PC-3 (cell line): ENCODE measurements at regions of chrX and their contacts with region 1.

Region 1: DNA sequence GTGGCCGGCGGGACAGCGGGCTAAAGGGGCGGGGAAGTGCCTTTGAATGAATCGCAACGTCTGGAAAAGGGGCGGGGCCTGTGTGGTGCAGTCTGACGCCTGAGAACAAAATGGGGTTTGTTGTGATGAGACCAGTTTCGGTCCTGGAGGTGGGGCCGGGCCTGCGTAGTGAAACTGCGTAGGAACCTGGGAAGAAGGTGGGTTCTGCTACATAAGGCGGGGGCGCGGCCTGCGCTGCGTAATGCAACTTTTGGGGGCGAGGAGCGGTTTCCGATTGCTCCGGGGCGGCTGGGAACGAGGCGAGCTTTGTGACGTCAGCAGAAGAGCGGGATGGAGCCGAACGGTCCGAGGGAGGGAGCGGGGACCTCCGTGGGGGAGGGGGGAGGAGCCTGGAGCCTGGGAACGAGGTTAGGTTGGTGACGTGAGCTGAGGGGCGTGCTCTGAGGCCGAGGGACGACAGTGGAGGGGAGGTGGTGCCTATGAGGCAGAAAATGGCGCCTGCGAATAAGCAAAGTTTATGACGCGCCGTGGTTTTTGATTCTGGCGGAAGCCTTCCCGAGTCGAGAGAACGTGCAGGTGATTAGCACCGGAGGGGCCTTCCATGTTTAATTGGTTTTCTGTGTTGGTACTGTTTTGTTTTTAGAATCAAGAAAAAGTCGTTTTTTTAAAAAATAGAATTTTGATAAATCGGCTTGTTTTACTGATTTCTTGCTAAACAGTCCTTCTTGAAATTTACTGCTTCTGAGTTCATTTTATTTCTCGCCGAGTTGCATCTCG is 716 bp downstream of the USP11 start:
- DNase-seq: peak; percentile 91
- ATAC-seq: peak; percentile 91
- H3K4me3 ChIP-seq: peak overlapping the region; percentile 77
- H3K27ac ChIP-seq: peak overlapping the region; percentile 98
- H3K4me1 ChIP-seq: peaks cover 9% of the 10 kb centered on the region
- H3K27me3 ChIP-seq: no peaks in the 10 kb centered on the region
- CTCF ChIP-seq: no peak

Region 2: GRCh38 chrX:47217642-47218279 is 15.8 kb before region 1 on chrX:
- CTCF ChIA-PET with region 1: interaction called, 4 read pairs
- POLR2A ChIA-PET with region 1: interaction called, 6 read pairs
- intact Hi-C with region 1: loop called (anchors 1 kb)
- DNase-seq: peak; percentile 98
- ATAC-seq: peak; percentile 83
- H3K4me3 ChIP-seq: peak overlapping the region; percentile 93
- H3K27ac ChIP-seq: peak overlapping the region; percentile 96
- H3K4me1 ChIP-seq: peaks cover 34% of the 10 kb centered on the region
- H3K27me3 ChIP-seq: no peaks in the 10 kb centered on the region
- CTCF ChIP-seq: no peak

Region 3: GRCh38 chrX:47296766-47297365 is 63.3 kb after region 1 on chrX:
- CTCF ChIA-PET with region 1: no interaction called
- POLR2A ChIA-PET with region 1: interaction called, 22 read pairs
- intact Hi-C with region 1: no loop called
- DNase-seq: peak; percentile 71
- ATAC-seq: no peak; the same call in 1 of the 2 replicates
- H3K4me3 ChIP-seq: 0 out of 2 replicates have a peak overlapping the region, but pooled peaks have one; percentile 29
- H3K27ac ChIP-seq: peak overlapping the region; percentile 93
- H3K4me1 ChIP-seq: peaks cover 12% of the 10 kb centered on the region
- H3K27me3 ChIP-seq: no peaks in the 10 kb centered on the region
- CTCF ChIP-seq: no peak

Region 4: DNA sequence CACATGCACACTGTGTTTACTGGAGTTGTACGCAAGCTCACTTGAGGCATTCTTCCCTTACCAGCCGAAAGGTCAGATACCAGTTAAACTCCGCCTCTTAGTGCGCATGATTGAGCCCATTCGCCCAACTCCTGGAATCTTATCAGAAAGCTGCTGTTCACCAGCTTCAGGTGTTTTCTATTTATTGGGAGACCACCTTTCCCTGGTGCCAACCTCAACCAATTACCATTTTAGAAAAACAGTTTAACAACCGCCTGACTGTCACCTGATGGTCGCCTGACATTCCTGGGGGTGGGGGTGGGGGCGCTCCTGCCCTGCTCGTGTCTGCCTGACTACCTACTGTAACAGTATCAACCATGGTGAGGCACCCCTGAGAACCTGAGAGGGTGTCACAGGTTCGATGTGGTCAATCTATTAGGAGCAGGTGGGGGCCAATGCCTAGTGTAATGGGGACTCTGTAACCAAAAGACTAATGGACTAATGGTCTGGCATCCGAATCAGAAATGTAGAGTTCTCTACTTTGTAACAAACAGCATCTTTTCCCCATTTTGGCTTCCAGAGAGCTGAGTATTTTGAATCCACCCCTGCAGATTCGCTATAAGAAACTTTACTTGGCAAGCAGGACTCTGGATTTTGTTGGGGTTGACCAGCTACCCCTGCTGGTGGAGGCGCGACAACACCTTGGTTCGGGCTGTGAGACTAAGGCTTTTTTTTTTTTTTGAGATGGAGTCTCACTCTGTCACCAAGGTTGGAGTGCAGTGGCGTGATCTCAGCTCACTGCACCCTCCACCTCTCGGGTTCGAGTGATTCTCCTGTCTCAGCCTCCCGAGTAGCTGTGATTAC is 78.6 kb after region 1 on chrX:
- CTCF ChIA-PET with region 1: interaction called, 3 read pairs
- POLR2A ChIA-PET with region 1: no interaction called
- intact Hi-C with region 1: loop called (anchors 5 kb)
- DNase-seq: peak; percentile 74
- ATAC-seq: peak; percentile 65
- H3K4me3 ChIP-seq: peak overlapping the region; percentile 51; the same call in 1 of the 2 replicates
- H3K27ac ChIP-seq: peak overlapping the region; percentile 32; the same call in 1 of the 2 replicates
- H3K4me1 ChIP-seq: peaks cover 4% of the 10 kb centered on the region; the same call in 1 of the 2 replicates
- H3K27me3 ChIP-seq: no peaks in the 10 kb centered on the region
- CTCF ChIP-seq: peak; percentile 75

Region 5: DNA sequence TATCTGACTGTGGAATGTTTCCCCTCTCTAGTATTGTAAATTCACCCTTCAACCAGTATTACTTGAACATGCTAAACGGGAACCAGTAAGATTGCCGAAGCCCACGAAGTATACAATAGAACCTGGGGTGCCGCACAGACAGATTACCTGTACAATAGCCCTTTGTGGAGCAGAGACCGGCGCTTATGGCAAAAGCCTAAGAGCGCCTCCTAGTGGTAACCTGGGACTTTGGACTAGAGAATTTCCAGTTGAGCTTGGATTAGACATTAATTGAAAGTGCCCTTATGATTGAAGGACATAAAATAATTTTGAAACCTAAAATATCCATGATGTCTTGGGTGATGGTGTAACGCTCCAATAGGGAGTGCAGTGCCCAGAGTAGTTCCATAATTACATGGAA is 151.0 kb after region 1 on chrX:
- CTCF ChIA-PET with region 1: no interaction called
- POLR2A ChIA-PET with region 1: interaction called, 11 read pairs
- intact Hi-C with region 1: no loop called
- DNase-seq: peak; percentile 85
- ATAC-seq: peak; percentile 77
- H3K4me3 ChIP-seq: no peak overlapping the region
- H3K27ac ChIP-seq: no peak overlapping the region
- H3K4me1 ChIP-seq: no peaks in the 10 kb centered on the region
- H3K27me3 ChIP-seq: no peaks in the 10 kb centered on the region
- CTCF ChIP-seq: peak; percentile 87